ENCODE measurements at regions of chr12 and their contacts with region 1.

Region 1: DNA sequence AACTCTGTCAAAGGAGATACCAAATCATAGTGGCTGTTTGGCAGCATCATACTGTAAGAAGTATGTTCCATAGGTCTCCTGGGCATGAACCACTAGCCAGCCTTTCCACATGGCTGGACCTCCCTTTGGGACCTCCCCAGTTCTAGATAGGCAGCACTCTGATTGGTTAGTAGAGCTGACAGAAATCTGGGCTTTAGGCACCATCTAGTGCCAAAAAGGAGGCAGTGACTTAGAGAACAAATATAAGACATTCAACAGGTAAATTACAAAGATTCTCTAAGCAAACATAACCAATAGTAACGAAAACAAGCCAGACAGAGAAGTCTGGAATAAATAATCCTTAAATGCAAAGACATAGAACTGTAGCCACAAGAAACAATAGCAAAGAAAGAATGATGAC is 148.0 kb upstream of the PDE3A start:
- DNase-seq: peak; percentile 46 to 47
- H3K4me3 ChIP-seq: no peak overlapping the region
- H3K4me3 Mint-ChIP-seq: no peak overlapping the region
- H3K27ac Mint-ChIP-seq: no peak overlapping the region
- H3K4me1 ChIP-seq: no peaks in the 10 kb centered on the region
- H3K4me1 Mint-ChIP-seq: no peaks in the 10 kb centered on the region
- H3K27me3 ChIP-seq: no peaks in the 10 kb centered on the region
- H3K27me3 Mint-ChIP-seq: no peaks in the 10 kb centered on the region
- CTCF ChIP-seq: peak; percentile 41 to 53

Region 2: GRCh38 chr12:19572920-19573558 is 647.3 kb before region 1 on chr12:
- CTCF ChIA-PET with region 1: no interaction called
- POLR2A ChIA-PET with region 1: no interaction called
- intact Hi-C with region 1: loop called (anchors 10 kb)
- DNase-seq: peak; percentile 55 to 62
- H3K4me3 ChIP-seq: no peak overlapping the region
- H3K4me3 Mint-ChIP-seq: no peak overlapping the region
- H3K27ac Mint-ChIP-seq: no peak overlapping the region
- H3K4me1 ChIP-seq: 0 out of 2 replicates have a peak, but pooled peaks cover 6% of the 10 kb centered on the region
- H3K4me1 Mint-ChIP-seq: peaks cover 7% of the 10 kb centered on the region
- H3K27me3 ChIP-seq: no peaks in the 10 kb centered on the region
- H3K27me3 Mint-ChIP-seq: no peaks in the 10 kb centered on the region
- CTCF ChIP-seq: peak; percentile 56 to 76

Region 3: DNA sequence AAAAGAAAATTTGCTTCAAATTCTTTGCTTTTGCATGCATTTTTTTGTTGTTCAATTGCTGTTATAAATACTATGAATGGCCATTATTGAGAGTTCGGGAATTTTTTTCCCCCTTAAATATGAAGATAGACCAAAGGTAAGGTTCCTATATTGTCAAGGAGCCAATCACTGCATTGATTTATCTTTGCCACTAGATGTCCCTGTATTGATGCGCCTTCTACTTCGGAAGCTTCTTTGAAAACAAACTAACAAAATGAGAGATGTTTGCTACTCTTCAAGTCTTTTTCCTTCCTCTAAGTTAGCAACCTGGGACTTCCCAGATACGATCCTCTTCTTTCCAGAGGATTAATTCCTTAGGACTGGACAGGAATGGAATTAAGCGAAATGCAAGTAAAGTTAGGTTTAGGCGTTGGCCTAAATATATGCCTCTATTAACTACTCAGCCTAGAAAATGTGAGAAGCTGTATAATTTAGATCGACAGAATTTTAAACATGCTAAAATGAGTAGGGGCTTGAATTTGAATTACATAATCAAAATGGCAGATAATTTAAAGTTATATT is 462.9 kb before region 1 on chr12:
- CTCF ChIA-PET with region 1: interaction called, 10 read pairs
- POLR2A ChIA-PET with region 1: no interaction called
- intact Hi-C with region 1: loop called (anchors 1 kb)
- DNase-seq: peak in 1 of 2 experiments; percentile 23
- H3K4me3 ChIP-seq: no peak overlapping the region
- H3K4me3 Mint-ChIP-seq: no peak overlapping the region
- H3K27ac Mint-ChIP-seq: no peak overlapping the region
- H3K4me1 ChIP-seq: no peaks in the 10 kb centered on the region
- H3K4me1 Mint-ChIP-seq: no peaks in the 10 kb centered on the region
- H3K27me3 ChIP-seq: no peaks in the 10 kb centered on the region
- H3K27me3 Mint-ChIP-seq: no peaks in the 10 kb centered on the region
- CTCF ChIP-seq: peak; percentile 78 to 80

Region 4: DNA sequence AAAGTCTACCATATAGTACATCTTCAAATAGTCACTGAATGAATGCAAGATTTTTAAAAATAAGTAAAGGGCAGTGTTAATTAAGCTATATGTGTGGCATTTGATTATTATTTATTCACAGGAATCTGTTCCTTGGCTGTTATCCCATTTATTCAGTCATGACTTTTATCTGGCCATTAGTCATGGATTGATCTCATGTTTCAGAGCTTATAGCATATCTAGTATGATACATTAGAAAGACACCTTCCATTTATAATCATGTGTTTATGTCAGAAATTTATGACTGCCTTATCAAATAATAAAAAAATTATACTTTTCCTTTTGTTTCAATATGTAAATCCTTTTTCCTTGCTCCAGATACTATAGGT is 100.0 kb before region 1 on chr12:
- CTCF ChIA-PET with region 1: no interaction called
- POLR2A ChIA-PET with region 1: no interaction called
- intact Hi-C with region 1: loop called (anchors 2 kb)
- DNase-seq: no peak
- H3K4me3 ChIP-seq: no peak overlapping the region
- H3K4me3 Mint-ChIP-seq: no peak overlapping the region
- H3K27ac Mint-ChIP-seq: no peak overlapping the region
- H3K4me1 ChIP-seq: no peaks in the 10 kb centered on the region
- H3K4me1 Mint-ChIP-seq: no peaks in the 10 kb centered on the region
- H3K27me3 ChIP-seq: no peaks in the 10 kb centered on the region
- H3K27me3 Mint-ChIP-seq: peaks cover 3% of the 10 kb centered on the region
- CTCF ChIP-seq: no peak

Region 5: DNA sequence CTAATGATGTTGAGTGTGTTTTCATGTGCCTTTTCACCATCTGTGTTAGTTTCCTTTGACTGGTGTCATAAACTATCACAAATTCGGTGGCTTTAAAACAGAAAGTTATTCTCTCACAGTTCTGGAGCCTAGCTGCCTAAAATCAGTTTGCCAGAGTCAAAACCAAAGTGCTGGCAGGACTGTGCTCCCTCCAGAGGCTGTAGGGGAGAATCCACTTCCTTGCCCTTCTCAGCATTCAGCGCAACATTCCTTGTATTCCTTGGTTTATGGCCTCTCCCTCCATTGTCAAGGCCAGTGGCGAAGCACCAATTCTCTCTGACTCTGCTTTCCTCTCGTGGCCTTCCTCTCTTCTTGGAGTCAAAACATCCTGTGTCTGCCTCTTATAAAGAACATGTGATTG is 26.2 kb before region 1 on chr12:
- CTCF ChIA-PET with region 1: interaction called, 3 read pairs
- POLR2A ChIA-PET with region 1: no interaction called
- intact Hi-C with region 1: loop called (anchors 1 kb)
- DNase-seq: peak; percentile 49 to 62
- H3K4me3 ChIP-seq: no peak overlapping the region
- H3K4me3 Mint-ChIP-seq: no peak overlapping the region
- H3K27ac Mint-ChIP-seq: no peak overlapping the region
- H3K4me1 ChIP-seq: peaks cover 11% of the 10 kb centered on the region
- H3K4me1 Mint-ChIP-seq: peaks cover 20% of the 10 kb centered on the region
- H3K27me3 ChIP-seq: no peaks in the 10 kb centered on the region
- H3K27me3 Mint-ChIP-seq: no peaks in the 10 kb centered on the region
- CTCF ChIP-seq: peak; percentile 44 to 69

Measured in Caco-2 (cell line).